ENCODE measurements at regions of chr1 and their contacts with region 1.

Region 1: GRCh38 chr1:153990468-153991150 is at the start of gene RPS27:
- DNase-seq: peak; percentile 94
- ATAC-seq: peak; percentile 79
- H3K4me3 Mint-ChIP-seq: peak within 1 kb of the TSS; percentile 93
- H3K27ac Mint-ChIP-seq: peak within 1 kb of the TSS; percentile 98
- H3K4me1 Mint-ChIP-seq: peaks cover 47% of the 10 kb centered on the region
- H3K27me3 Mint-ChIP-seq: no peaks in the 10 kb centered on the region
- total RNA-seq, gene RPS27: 1,866 to 2,104 TPM

Region 2: GRCh38 chr1:153670859-153671627 is 319.6 kb before region 1 on chr1 and contains the start of gene ILF2:
- CTCF ChIA-PET with region 1: interaction called, 17 read pairs
- POLR2A ChIA-PET with region 1: interaction called, 8 read pairs
- DNase-seq: peak; percentile 99
- ATAC-seq: peak; percentile 93
- H3K4me3 Mint-ChIP-seq: no peak within 1 kb of the TSS
- H3K27ac Mint-ChIP-seq: no peak within 1 kb of the TSS
- H3K4me1 Mint-ChIP-seq: peaks cover 33% of the 10 kb centered on the region
- H3K27me3 Mint-ChIP-seq: no peaks in the 10 kb centered on the region
- total RNA-seq, gene ILF2: 211 to 215 TPM

Region 3: DNA sequence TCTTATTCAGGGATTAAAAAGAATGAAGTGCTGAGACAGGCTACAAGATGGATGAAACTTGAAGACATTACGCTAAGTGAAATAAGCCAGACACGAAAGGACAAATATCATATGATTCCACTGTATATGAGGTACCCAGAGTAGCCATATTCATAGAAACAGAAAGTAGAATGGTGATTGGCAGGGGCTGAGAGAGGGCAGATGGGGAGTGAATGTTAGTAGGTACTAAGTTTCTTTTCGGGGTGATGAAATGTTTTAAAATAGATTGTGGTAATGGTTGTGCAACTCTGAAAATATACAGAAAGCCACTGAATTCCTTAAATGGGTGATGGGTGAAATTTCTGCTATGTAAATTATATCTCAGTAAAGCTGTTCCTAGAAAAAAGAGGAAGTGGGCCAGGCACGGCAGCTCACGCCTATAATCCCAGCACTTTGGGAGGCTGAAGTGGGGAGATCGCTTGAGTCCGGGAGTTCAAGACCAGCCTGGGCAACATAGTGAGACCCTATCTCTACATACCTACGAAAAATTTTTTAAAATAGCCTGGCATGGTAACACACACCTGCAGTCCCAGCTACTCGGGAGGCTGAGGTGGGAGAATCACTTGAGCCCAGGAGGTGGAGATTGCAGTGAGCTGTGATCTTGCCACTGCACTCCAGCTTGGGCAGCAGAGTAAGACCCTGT is 199.5 kb before region 1 on chr1:
- CTCF ChIA-PET with region 1: interaction called, 50 read pairs
- POLR2A ChIA-PET with region 1: interaction called, 5 read pairs
- DNase-seq: peak; percentile 69
- ATAC-seq: peak; percentile 88
- H3K4me3 Mint-ChIP-seq: peak overlapping the region; percentile 29
- H3K27ac Mint-ChIP-seq: peak overlapping the region; percentile 80
- H3K4me1 Mint-ChIP-seq: peaks cover 70% of the 10 kb centered on the region
- H3K27me3 Mint-ChIP-seq: peaks cover 6% of the 10 kb centered on the region

Region 4: DNA sequence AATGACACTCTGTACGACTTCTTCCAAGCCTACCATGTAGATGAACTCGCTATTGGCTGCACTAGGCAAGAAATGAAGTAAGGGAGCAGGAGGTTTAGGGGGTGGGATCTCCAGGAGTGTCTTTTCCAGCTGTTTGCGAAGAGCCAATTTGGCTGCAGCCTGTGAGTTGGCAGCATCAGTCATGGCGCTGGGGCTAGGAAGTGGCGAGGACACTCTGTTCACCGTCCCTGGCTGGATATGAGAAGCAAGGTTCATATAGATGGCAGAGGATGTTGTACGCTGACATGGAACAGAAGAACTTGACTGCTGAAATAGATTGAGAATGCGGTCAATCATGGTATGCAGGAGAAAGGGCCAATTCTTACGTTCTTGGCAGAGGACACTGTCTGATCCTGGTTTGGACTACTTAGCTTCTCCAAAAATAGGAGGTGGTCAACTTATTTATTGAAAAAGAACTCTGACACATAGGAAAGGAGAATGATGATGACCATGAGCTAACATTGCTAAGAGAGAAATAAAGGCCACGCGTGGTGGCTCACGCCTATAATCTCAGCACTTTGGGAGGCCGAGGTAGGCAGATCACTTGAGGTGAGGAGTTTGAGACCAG is 174.2 kb before region 1 on chr1:
- CTCF ChIA-PET with region 1: interaction called, 32 read pairs
- POLR2A ChIA-PET with region 1: interaction called, 3 read pairs
- DNase-seq: no peak
- ATAC-seq: no peak
- H3K4me3 Mint-ChIP-seq: no peak overlapping the region
- H3K27ac Mint-ChIP-seq: no peak overlapping the region
- H3K4me1 Mint-ChIP-seq: peaks cover 2% of the 10 kb centered on the region
- H3K27me3 Mint-ChIP-seq: no peaks in the 10 kb centered on the region

Region 5: GRCh38 chr1:153946622-153947241 is 43.9 kb before region 1 on chr1 and contains the start of gene DENND4B:
- CTCF ChIA-PET with region 1: interaction called, 28 read pairs
- POLR2A ChIA-PET with region 1: interaction called, 22 read pairs
- DNase-seq: peak; percentile 81
- ATAC-seq: peak; percentile 66
- H3K4me3 Mint-ChIP-seq: peak within 1 kb of the TSS; percentile 96
- H3K27ac Mint-ChIP-seq: peak within 1 kb of the TSS; percentile 97
- H3K4me1 Mint-ChIP-seq: peaks cover 32% of the 10 kb centered on the region
- H3K27me3 Mint-ChIP-seq: no peaks in the 10 kb centered on the region
- total RNA-seq, gene DENND4B: 140 to 143 TPM

Region 6: GRCh38 chr1:153977250-153978240 is 13.1 kb before region 1 on chr1 and contains the start of gene JTB:
- CTCF ChIA-PET with region 1: interaction called, 74 read pairs
- POLR2A ChIA-PET with region 1: interaction called, 49 read pairs
- DNase-seq: peak; percentile 91
- ATAC-seq: peak; percentile 96
- H3K4me3 Mint-ChIP-seq: peak within 1 kb of the TSS; percentile 97
- H3K27ac Mint-ChIP-seq: peak within 1 kb of the TSS; percentile 93
- H3K4me1 Mint-ChIP-seq: peaks cover 48% of the 10 kb centered on the region
- H3K27me3 Mint-ChIP-seq: no peaks in the 10 kb centered on the region
- total RNA-seq, gene JTB: 133 to 140 TPM

Measured in activated CD8-positive, alpha-beta T cell treated with anti-CD3 and anti-CD28 coated beads, Interleukin-2, amount 10 ng/mL, durations not matched to agents 7 days and 5 days (primary cell).